Activated naive CD4-positive, alpha-beta T cell treated with anti-CD3 and anti-CD28 coated beads, Interleukin-2, amount 10 ng/mL, durations not matched to agents 7 days and 5 days (primary cell): ENCODE measurements at regions of chr17 and their contacts with region 1.

Region 1: GRCh38 chr17:45098869-45099616 is 33.3 kb downstream of the PLCD3 start:
- DNase-seq: peak; percentile 86
- H3K4me3 Mint-ChIP-seq: no peak overlapping the region
- H3K27ac Mint-ChIP-seq: no peak overlapping the region
- H3K4me1 Mint-ChIP-seq: no peaks in the 10 kb centered on the region
- H3K27me3 Mint-ChIP-seq: no peaks in the 10 kb centered on the region

Region 2: GRCh38 chr17:44904001-44904984 is 194.8 kb before region 1 on chr17:
- CTCF ChIA-PET with region 1: no interaction called
- DNase-seq: peak; percentile 12
- H3K4me3 Mint-ChIP-seq: no peak overlapping the region
- H3K27ac Mint-ChIP-seq: no peak overlapping the region
- H3K4me1 Mint-ChIP-seq: peaks cover 12% of the 10 kb centered on the region
- H3K27me3 Mint-ChIP-seq: peaks cover 64% of the 10 kb centered on the region

Region 3: DNA sequence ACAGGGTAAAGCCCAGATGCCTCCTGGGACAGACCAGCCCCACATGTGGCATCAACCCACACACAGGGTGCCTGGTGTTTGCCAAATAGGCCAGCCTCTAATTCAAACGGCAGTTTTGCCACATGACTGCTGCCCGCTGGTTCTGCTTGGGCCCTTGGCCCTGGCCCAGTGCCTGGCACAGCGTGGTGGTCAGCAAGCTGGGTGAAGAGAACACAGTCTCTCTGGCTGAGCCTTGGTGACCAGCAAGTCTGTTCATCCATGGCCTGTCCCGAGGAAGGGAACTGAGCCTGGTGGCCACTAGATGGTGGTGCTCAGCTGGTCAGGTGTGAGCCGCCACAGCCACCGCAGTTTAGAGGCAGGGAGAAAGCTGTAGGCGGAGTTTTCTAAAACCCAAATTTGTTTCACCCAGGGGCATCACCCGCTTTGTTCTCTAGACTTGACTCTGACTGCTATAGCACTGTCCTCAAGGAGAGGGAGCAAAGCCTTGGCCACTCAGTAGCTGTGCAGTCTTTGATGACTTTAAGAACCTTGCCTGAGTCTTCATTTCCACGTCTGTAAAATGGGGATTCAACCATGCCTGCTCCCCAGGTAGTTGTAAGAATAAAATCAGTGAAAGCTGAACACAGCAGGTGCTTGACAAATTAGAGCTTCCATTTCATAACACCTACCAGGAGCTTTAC is 179.0 kb before region 1 on chr17:
- CTCF ChIA-PET with region 1: interaction called, 10 read pairs
- DNase-seq: peak; percentile 78
- H3K4me3 Mint-ChIP-seq: no peak overlapping the region
- H3K27ac Mint-ChIP-seq: no peak overlapping the region
- H3K4me1 Mint-ChIP-seq: no peaks in the 10 kb centered on the region
- H3K27me3 Mint-ChIP-seq: peaks cover 74% of the 10 kb centered on the region

Region 4: GRCh38 chr17:45048795-45049563 is 50.1 kb before region 1 on chr17:
- CTCF ChIA-PET with region 1: interaction called, 13 read pairs
- DNase-seq: no peak
- H3K4me3 Mint-ChIP-seq: peak overlapping the region; percentile 86
- H3K27ac Mint-ChIP-seq: peak overlapping the region; percentile 98
- H3K4me1 Mint-ChIP-seq: peaks cover 50% of the 10 kb centered on the region
- H3K27me3 Mint-ChIP-seq: no peaks in the 10 kb centered on the region

Region 5: DNA sequence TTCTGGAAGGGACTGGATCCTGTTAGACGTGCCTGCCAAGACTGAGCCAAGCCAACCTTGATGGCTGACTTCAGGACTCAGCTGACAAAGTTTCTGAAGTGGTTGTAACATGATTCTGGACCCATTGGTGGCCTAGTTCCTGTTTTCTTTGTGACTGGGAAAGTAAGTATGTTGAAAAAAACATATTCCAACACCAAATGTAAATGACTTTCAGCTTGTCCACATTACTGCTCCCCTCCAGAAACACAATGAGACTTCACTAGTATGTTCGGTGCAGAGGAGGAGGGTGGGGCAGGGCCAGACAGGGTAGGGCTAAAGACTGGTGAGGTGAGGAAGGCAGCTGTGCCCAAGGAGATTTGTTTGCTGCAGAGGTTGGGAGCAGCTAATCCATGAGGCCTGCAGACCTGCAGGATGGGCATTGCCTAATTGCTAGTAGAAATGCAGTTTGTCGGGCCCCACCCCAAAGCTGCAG is 11.5 kb before region 1 on chr17:
- CTCF ChIA-PET with region 1: interaction called, 28 read pairs
- DNase-seq: no peak
- H3K4me3 Mint-ChIP-seq: no peak overlapping the region
- H3K27ac Mint-ChIP-seq: no peak overlapping the region
- H3K4me1 Mint-ChIP-seq: peaks cover 9% of the 10 kb centered on the region
- H3K27me3 Mint-ChIP-seq: no peaks in the 10 kb centered on the region

Region 6: GRCh38 chr17:45115871-45116724 is 17.1 kb after region 1 on chr17:
- CTCF ChIA-PET with region 1: interaction called, 14 read pairs
- DNase-seq: no peak
- H3K4me3 Mint-ChIP-seq: no peak overlapping the region
- H3K27ac Mint-ChIP-seq: no peak overlapping the region
- H3K4me1 Mint-ChIP-seq: no peaks in the 10 kb centered on the region
- H3K27me3 Mint-ChIP-seq: peaks cover 40% of the 10 kb centered on the region

Region 7: DNA sequence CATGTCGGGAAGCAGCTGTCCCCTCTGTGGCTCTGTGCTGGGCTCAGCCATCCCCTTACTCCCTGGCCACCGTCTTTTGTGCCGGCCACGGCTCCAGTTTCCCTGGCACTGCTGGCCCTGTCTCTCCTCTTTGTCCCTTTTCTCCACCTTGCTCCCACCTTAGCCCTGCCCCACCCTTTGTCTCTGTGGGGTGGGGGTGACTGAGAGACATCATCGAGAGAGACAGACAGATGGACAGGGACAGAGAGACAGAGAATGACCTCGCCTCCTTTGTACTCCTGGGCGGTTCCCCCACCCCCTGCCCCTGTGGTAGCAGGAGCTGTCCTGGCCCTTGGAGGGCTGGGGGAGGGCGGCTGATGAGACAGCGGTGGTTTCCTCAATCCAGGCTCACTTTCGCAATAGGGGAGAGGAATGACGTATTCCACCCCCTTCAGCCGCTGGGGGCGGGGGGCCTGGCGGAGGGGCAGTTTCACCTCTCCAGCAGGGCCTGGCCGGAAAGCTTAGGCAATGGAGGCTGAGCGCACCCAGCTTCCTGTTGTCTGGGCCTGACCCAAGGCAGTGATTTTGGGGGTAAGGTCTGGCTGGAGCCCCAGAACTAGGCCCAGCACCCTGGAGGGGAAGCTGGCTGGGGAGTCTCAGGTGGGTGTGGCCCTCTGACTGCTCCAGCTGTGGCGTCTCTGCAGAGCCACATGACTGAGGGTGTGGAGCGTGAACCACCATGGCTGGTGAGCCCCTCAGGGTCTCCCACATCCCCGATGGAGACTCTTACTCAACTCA is 129.9 kb after region 1 on chr17:
- CTCF ChIA-PET with region 1: no interaction called
- DNase-seq: peak; percentile 85
- H3K4me3 Mint-ChIP-seq: peak overlapping the region; percentile 100
- H3K27ac Mint-ChIP-seq: peak overlapping the region; percentile 99
- H3K4me1 Mint-ChIP-seq: peaks cover 89% of the 10 kb centered on the region
- H3K27me3 Mint-ChIP-seq: no peaks in the 10 kb centered on the region